Left cardiac atrium (tissue), 4 donors: ENCODE measurements at regions of chr9 and their contacts with region 1.

Region 1: GRCh38 chr9:120936011-120936763 is 9.6 kb upstream of the TRAF1 start:
- DNase-seq: peak; percentile 96
- ATAC-seq: peak; percentile 81 to 82

Region 2: GRCh38 chr9:120619751-120620655 is 316.2 kb before region 1 on chr9:
- intact Hi-C with region 1: loop called in 1 of 2 experiments (anchors 10 kb)
- DNase-seq: no peak
- ATAC-seq: peak; percentile 65 to 84

Region 3: DNA sequence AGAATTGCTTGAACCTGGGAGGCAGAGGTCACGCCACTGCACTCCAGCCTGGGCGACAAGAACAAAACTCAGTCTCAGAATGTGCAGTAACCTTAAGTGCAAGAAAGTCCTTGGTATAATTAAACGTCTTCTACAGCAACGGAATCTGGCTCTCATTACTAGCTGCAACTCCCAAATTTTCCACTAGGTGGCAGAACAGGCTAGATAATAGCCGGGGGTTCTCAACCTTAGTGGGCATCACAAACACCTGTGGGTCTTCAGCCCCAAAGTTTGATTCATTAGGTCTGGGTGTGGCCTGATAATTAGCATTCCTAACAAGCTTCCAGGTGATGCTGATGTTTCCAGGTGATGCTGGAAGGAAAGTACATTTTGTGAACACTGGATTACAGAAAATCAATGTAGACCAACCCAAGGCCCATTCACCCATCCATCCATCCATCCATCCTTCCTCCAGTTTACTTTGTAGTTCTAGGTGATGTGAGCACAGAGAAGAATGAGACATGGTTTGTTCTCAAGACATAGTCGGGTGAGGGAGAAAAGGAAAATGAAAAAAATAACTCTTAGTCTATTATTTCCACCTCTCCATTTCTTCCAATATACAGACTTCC is 180.3 kb before region 1 on chr9:
- intact Hi-C with region 1: loop called (anchors 2 to 5 kb)
- DNase-seq: peak; percentile 33
- ATAC-seq: peak; percentile 55 to 76

Region 4: GRCh38 chr9:120792898-120793765 is 143.1 kb before region 1 on chr9 and contains the start of gene FBXW2:
- intact Hi-C with region 1: loop called (anchors 5 to 10 kb)
- DNase-seq: peak; percentile 94
- ATAC-seq: peak; percentile 100
- total RNA-seq, gene FBXW2: 44.6 to 45.5 TPM

Region 5: GRCh38 chr9:120868676-120869359 is 67.4 kb before region 1 on chr9:
- intact Hi-C with region 1: loop called in 1 of 2 experiments (anchors 2 kb)
- DNase-seq: peak; percentile 97
- ATAC-seq: peak; percentile 94 to 97

Region 6: GRCh38 chr9:120875954-120876841 is 60.0 kb before region 1 on chr9:
- intact Hi-C with region 1: loop called in 1 of 2 experiments (anchors 5 kb)
- DNase-seq: peak; percentile 90
- ATAC-seq: peak; percentile 73 to 85